Naive thymus-derived CD4-positive, alpha-beta T cell (primary cell): ENCODE measurements at regions of chr19 and their contacts with region 1.

Region 1: GRCh38 chr19:36772311-36773222 is at the start of gene ZNF850:
- DNase-seq: peak; percentile 88 to 97 (median 94)
- ATAC-seq: peak; percentile 94
- H3K4me3 ChIP-seq: peak within 1 kb of the TSS; percentile 97
- H3K4me3 Mint-ChIP-seq: peak within 1 kb of the TSS; percentile 88 to 98 (median 96)
- H3K27ac ChIP-seq: peak within 1 kb of the TSS; percentile 87
- H3K27ac Mint-ChIP-seq: peak within 1 kb of the TSS; percentile 82 to 98 (median 92)
- H3K4me1 ChIP-seq: peaks cover 12 to 15% of the 10 kb centered on the region in 2 donors
- H3K4me1 Mint-ChIP-seq: peaks cover 21 to 26% (median 24%) of the 10 kb centered on the region in 7 donors
- H3K27me3 ChIP-seq: no peaks in the 10 kb centered on the region
- H3K27me3 Mint-ChIP-seq: no peaks in the 10 kb centered on the region
- total RNA-seq, gene ZNF850: 1.9 to 4.8 (median 4.3) TPM

Region 2: DNA sequence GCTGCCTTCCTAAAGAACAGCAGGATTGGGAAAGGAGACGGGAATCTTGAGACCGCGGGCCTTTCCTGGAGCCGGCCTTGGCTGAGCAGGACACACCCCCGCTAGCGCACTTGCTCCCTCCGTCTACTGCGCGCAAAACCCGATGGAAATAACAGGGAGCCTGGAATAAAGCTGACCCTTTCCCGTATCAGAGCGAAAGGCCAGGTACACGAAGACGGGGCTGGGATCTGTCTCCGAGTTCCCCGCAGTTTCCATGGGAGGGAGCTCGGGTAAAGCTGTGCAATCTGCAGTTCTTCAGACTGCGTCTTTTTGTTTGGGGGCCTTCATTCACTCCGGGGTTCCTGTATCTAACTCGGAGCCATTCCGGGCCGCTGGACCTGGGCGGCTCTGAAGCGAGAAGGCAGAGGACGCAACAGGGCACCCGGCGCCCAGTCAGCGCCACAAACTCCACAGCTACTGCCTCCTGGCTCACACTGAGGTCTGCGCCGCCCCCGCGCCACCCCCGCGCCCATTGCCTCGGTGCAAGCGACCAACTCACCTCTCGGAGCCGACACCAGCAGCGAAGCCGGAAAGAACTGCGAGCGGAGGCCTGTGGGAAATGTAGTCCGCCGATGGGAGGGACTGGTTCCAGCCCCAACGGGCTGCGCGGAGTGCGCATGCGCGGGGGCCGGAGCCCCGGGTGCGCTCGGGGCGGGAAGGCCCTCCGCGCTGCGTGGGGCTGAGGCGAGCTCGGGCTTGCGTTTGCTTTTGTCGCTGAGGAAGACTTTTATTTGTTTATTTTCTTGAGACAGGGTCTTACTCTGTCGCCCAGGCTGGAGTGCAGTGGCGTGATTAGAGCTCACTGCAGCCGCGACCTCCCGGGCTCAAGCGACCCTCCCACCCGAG is 393.7 kb before region 1 on chr19 and contains the start of gene ZFP14:
- CTCF ChIA-PET with region 1: no interaction called
- POLR2A ChIA-PET with region 1: no interaction called
- intact Hi-C with region 1: loop called (anchors 1 to 2 kb)
- DNase-seq: peak; percentile 86 to 95 (median 93)
- ATAC-seq: peak; percentile 99
- H3K4me3 ChIP-seq: peak within 1 kb of the TSS; percentile 86
- H3K4me3 Mint-ChIP-seq: peak within 1 kb of the TSS; percentile 82 to 98 (median 94)
- H3K27ac ChIP-seq: peak within 1 kb of the TSS; percentile 86
- H3K27ac Mint-ChIP-seq: peak within 1 kb of the TSS; percentile 55 to 98 (median 94)
- H3K4me1 ChIP-seq: peaks cover 0 to 10% of the 10 kb centered on the region in 2 donors
- H3K4me1 Mint-ChIP-seq: peaks cover 9 to 23% (median 21%) of the 10 kb centered on the region in 7 donors
- H3K27me3 ChIP-seq: no peaks in the 10 kb centered on the region
- H3K27me3 Mint-ChIP-seq: no peaks in the 10 kb centered on the region
- total RNA-seq, gene ZFP14: 5.3 to 24.0 (median 9.2) TPM

Region 3: GRCh38 chr19:36573020-36573885 is 199.3 kb before region 1 on chr19 and contains the start of gene ZNF529:
- CTCF ChIA-PET with region 1: no interaction called
- POLR2A ChIA-PET with region 1: no interaction called
- intact Hi-C with region 1: loop called (anchors 1 kb)
- DNase-seq: peak; percentile 67 to 95 (median 85)
- ATAC-seq: peak; percentile 95
- H3K4me3 ChIP-seq: peak within 1 kb of the TSS; percentile 95
- H3K4me3 Mint-ChIP-seq: peak within 1 kb of the TSS; percentile 80 to 100 (median 93)
- H3K27ac ChIP-seq: peak within 1 kb of the TSS; percentile 98
- H3K27ac Mint-ChIP-seq: peak within 1 kb of the TSS; percentile 94 to 100 (median 98)
- H3K4me1 ChIP-seq: peaks cover 0 to 15% of the 10 kb centered on the region in 2 donors
- H3K4me1 Mint-ChIP-seq: peaks cover 23 to 46% (median 40%) of the 10 kb centered on the region in 7 donors
- H3K27me3 ChIP-seq: no peaks in the 10 kb centered on the region
- H3K27me3 Mint-ChIP-seq: no peaks in the 10 kb centered on the region
- total RNA-seq, gene ZNF529: 22.6 to 37.8 (median 33.8) TPM

Region 4: GRCh38 chr19:36796076-36796992 is 23.8 kb after region 1 on chr19:
- CTCF ChIA-PET with region 1: no interaction called
- POLR2A ChIA-PET with region 1: interaction called, 4 read pairs
- intact Hi-C with region 1: loop called (anchors 1 kb)
- DNase-seq: no peak
- ATAC-seq: no peak
- H3K4me3 ChIP-seq: peak overlapping the region; percentile 100
- H3K4me3 Mint-ChIP-seq: peak overlapping the region; percentile 87 to 99 (median 98)
- H3K27ac ChIP-seq: peak overlapping the region; percentile 79
- H3K27ac Mint-ChIP-seq: peak overlapping the region; percentile 87 to 100 (median 98)
- H3K4me1 ChIP-seq: no peaks in the 10 kb centered on the region
- H3K4me1 Mint-ChIP-seq: peaks cover 0 to 28% (median 16%) of the 10 kb centered on the region in 7 donors
- H3K27me3 ChIP-seq: no peaks in the 10 kb centered on the region
- H3K27me3 Mint-ChIP-seq: peaks cover 0 to 10% (median 9%) of the 10 kb centered on the region in 5 donors

Region 5: GRCh38 chr19:36973021-36973843 is 200.7 kb after region 1 on chr19:
- CTCF ChIA-PET with region 1: no interaction called
- POLR2A ChIA-PET with region 1: no interaction called
- intact Hi-C with region 1: loop called in 1 of 2 experiments (anchors 5 kb)
- DNase-seq: peak; percentile 56 to 84 (median 73)
- ATAC-seq: peak; percentile 96
- H3K4me3 ChIP-seq: peak overlapping the region; percentile 100
- H3K4me3 Mint-ChIP-seq: peak overlapping the region; percentile 92 to 99 (median 97)
- H3K27ac ChIP-seq: peak overlapping the region; percentile 75
- H3K27ac Mint-ChIP-seq: peak overlapping the region; percentile 83 to 97 (median 92)
- H3K4me1 ChIP-seq: peaks cover 5 to 15% of the 10 kb centered on the region in 2 donors
- H3K4me1 Mint-ChIP-seq: peaks cover 9 to 22% (median 13%) of the 10 kb centered on the region in 7 donors
- H3K27me3 ChIP-seq: no peaks in the 10 kb centered on the region
- H3K27me3 Mint-ChIP-seq: no peaks in the 10 kb centered on the region

Region 6: DNA sequence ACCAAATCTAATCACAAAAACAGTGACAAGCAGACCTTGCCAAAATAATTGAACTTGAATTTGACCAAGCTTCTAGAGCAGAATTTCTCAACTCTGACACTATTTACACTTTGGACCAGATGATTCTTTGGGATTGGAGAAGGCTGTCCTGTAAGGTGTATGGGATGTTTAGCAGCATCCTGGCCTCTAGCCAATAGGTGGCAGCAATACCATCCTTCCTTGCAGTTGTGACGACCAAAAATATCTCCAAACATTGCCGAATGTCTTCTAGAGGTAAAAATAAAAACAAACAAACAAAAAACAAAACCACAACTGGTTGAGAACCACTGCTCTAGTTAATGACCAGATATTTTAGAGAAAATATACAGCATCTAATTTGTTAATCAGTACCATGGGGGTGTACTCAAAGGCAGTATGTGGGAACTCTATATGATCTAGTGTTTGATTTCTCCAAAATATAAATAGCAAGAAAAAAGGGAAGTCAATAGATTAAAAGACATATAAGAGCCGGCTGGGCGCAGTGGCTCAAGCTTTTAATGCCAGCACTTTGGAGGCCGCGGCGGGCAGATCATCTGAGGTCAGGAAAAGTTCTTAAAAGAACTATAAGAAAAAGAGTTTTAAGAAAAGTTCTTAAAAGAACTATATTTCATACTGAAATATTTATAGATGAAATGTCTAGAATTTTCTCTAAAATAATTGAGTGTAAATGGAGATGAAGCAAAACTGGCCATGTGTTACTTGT is 537.4 kb after region 1 on chr19:
- CTCF ChIA-PET with region 1: no interaction called
- POLR2A ChIA-PET with region 1: no interaction called
- intact Hi-C with region 1: loop called (anchors 10 kb)
- DNase-seq: peak in 3 of 9 donors; percentile 18 to 38 (median 32)
- ATAC-seq: peak; percentile 36
- H3K4me3 ChIP-seq: no peak overlapping the region
- H3K4me3 Mint-ChIP-seq: no peak overlapping the region
- H3K27ac ChIP-seq: no peak overlapping the region
- H3K27ac Mint-ChIP-seq: peak overlapping the region in 1 of 9 donors; percentile 28
- H3K4me1 ChIP-seq: peaks cover 0 to 5% of the 10 kb centered on the region in 2 donors
- H3K4me1 Mint-ChIP-seq: peaks cover 0 to 21% (median 13%) of the 10 kb centered on the region in 7 donors
- H3K27me3 ChIP-seq: no peaks in the 10 kb centered on the region
- H3K27me3 Mint-ChIP-seq: peaks cover 0 to 27% (median 19%) of the 10 kb centered on the region in 5 donors